ENCODE measurements at regions of chr1 and their contacts with region 1.

Region 1: GRCh38 chr1:15417365-15417934 is 7.8 kb downstream of the EFHD2 start:
- DNase-seq: no peak
- ATAC-seq: peak; percentile 9

Region 2: GRCh38 chr1:15288173-15288926 is 129.1 kb before region 1 on chr1:
- intact Hi-C with region 1: no loop called
- DNase-seq: no peak
- ATAC-seq: no peak

Region 3: DNA sequence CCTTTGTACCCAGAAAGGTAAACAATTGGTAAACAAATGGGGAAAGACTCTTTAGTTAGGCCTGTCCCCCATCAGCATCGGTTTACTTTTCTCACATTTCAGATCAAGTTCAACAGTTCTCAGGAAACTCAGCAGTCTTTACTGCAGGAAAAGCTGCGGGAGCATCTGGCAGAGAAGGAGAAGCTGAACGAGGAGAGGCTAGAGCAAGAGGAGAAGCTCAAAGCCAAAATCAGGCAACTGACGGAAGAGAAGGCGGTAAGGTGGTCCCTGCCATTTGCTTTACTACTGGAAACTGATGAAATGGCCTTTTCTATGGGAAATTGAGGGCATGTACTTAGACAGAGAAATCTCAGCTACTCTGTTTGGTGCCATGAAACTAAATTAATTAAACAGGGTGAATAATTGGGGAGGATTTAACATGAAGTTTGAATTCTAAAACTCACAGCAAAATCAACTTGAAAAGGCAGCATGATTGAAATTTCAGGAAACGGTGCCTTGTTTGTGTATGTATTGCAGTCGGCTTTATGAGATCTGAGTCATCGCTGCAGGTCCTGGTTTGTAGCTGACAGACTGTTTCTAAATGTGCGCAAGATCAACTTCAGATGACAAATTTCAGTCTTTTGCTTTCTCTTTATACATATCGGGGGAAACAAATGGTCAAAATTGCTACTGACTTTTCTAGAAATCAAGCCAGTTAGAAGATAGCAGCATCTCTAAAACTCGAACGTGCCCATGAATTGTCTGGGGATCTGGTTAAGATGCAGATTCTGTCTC is 75.6 kb before region 1 on chr1:
- intact Hi-C with region 1: loop called (anchors 5 kb)
- DNase-seq: no peak
- ATAC-seq: no peak

Region 4: DNA sequence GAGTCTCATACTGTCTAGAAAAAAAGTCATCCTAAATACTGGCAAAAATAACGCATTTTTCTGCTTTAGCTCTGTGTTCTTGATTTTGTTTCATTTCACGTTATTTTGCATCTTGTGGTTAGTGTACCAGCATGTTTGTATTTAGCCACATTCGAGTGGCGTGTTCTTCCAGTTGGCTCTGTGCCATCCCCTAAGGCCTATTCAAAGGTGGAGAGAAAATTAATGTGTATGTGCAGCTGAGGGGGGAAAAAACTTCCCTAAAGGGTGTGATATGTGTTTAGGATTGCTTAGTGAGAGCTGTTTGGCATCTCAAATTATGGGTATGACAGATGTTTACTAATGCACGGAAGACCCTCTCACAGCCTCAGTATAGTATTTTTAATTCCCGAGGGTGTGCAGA is 121.3 kb after region 1 on chr1:
- intact Hi-C with region 1: no loop called
- DNase-seq: no peak
- ATAC-seq: no peak

Region 5: GRCh38 chr1:15559294-15559761 is 141.9 kb after region 1 on chr1:
- intact Hi-C with region 1: no loop called
- DNase-seq: no peak
- ATAC-seq: no peak